GM10248 (cell line): ENCODE measurements at regions of chr20 and their contacts with region 1.

Region 1: DNA sequence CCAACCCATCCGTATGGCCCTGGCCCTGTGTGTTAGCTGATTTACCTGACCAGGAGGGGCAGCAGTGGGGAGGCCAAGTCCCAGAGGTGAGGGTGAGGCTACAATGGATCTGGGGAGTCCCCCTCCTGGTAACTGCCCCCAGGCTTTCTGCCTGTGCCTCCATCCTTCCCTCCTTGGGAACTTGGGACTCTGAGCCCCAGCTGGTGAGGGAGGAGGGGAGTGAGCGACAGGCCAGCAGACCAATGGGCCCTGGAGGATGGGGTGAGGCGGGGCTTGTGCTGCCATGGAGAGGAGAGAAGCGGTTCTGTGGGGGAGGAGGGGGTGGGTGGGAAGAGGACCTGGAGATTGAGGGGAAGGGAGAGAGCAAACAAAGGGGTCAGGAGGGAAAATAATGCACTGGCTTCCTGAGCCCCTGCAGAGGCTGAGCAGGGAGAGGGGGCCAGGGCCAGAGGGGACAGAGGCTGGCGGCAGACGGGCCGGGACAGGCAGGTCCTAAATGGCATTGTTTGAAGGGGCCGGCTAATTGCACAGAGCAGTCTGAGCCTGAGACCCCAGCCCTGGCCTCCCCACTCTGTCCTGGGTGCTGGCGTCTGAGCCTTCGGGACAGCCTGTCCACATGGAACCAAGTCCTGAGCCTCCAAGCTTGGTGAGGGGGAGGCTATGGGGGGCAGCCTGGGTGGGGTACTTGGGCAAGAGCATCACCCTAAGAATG is 17.5 kb downstream of the DNMT3B start:
- DNase-seq: no peak
- CTCF ChIP-seq: no peak

Region 2: DNA sequence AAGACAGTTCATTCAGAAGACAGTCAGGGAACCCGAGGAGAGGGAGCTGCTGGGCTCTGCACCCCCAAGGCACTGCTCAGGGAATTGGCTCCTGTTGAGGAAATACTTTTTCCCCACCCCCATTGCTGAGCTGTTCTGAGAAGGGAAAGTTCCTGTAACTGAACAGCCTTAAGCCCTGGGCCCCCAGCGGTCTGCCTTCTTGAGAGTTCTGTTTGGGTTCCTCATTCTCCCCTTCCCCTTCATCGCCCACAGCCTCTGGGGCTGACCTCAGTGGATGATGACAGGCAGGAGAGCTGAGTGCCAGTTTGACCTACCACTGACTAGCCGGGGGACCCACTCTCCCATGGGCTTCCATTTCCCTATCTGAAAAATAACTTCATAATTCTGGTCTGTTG is 716.9 kb before region 1 on chr20:
- CTCF ChIA-PET with region 1: no interaction called
- POLR2A ChIA-PET with region 1: no interaction called
- DNase-seq: peak; percentile 54
- CTCF ChIP-seq: no peak

Region 3: GRCh38 chr20:32427996-32428395 is 351.7 kb before region 1 on chr20:
- CTCF ChIA-PET with region 1: no interaction called
- POLR2A ChIA-PET with region 1: no interaction called
- DNase-seq: no peak
- CTCF ChIP-seq: no peak

Region 4: GRCh38 chr20:32528171-32528891 is 251.3 kb before region 1 on chr20:
- CTCF ChIA-PET with region 1: interaction called, 12 read pairs
- POLR2A ChIA-PET with region 1: no interaction called
- DNase-seq: no peak
- CTCF ChIP-seq: no peak

Region 5: DNA sequence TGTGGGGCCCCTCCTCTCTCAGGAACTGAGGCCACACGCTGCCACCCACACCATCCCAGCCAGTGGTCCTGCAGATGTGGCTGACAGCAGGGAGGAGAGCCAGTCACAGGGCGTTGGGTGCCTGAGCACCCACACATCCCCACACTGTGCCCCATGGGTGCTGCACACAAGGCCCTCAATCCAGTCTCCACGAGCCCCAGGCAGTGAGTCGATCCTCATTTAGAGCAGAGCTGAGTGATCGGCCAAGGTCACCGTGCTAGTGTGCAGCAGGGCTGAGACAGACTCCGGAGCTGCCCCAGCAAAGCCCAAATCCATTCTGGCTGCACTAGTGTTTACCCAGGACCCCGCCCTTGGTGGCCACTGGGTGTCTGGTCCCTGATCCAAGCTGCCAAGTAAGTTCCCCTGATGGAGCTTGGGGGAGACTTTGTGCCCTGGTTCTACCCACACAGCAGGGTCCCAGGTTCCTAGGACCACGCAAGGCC is 114.9 kb before region 1 on chr20:
- CTCF ChIA-PET with region 1: interaction called, 14 read pairs
- POLR2A ChIA-PET with region 1: no interaction called
- DNase-seq: no peak
- CTCF ChIP-seq: no peak

Region 6: GRCh38 chr20:32762149-32762753 is 17.4 kb before region 1 on chr20 and contains the start of gene DNMT3B:
- CTCF ChIA-PET with region 1: interaction called, 81 read pairs
- POLR2A ChIA-PET with region 1: interaction called, 3 read pairs
- DNase-seq: peak; percentile 88
- CTCF ChIP-seq: peak; percentile 22

Region 7: GRCh38 chr20:32796981-32797451 is 17.4 kb after region 1 on chr20:
- CTCF ChIA-PET with region 1: interaction called, 24 read pairs
- POLR2A ChIA-PET with region 1: no interaction called
- DNase-seq: no peak
- CTCF ChIP-seq: no peak

Region 8: GRCh38 chr20:32980131-32980941 is 200.7 kb after region 1 on chr20:
- CTCF ChIA-PET with region 1: no interaction called
- POLR2A ChIA-PET with region 1: no interaction called
- DNase-seq: no peak
- CTCF ChIP-seq: no peak

Region 9: DNA sequence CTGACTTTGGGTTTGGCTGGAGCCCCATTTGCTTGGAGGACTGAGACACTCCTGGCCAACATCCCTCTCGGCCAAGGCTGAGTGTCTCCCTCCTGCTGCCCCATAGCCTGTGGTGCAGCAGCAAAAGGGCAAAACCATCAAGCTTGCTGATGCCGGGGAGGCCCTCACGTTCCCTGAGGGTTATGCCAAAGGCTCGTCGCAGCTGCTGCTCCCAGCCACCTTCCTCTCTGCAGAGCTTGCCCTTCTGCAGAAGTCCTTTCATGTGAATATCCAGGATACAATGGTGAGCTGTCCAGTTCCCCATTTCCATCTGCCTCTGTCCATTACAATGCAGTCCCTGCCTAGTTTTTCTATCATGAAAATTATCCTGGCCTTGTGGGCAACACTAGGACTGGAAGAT is 257.8 kb after region 1 on chr20:
- CTCF ChIA-PET with region 1: no interaction called
- POLR2A ChIA-PET with region 1: no interaction called
- DNase-seq: no peak
- CTCF ChIP-seq: no peak